Stomach (tissue), 19 donors: ENCODE measurements at regions of chr4 and their contacts with region 1.

Region 1: DNA sequence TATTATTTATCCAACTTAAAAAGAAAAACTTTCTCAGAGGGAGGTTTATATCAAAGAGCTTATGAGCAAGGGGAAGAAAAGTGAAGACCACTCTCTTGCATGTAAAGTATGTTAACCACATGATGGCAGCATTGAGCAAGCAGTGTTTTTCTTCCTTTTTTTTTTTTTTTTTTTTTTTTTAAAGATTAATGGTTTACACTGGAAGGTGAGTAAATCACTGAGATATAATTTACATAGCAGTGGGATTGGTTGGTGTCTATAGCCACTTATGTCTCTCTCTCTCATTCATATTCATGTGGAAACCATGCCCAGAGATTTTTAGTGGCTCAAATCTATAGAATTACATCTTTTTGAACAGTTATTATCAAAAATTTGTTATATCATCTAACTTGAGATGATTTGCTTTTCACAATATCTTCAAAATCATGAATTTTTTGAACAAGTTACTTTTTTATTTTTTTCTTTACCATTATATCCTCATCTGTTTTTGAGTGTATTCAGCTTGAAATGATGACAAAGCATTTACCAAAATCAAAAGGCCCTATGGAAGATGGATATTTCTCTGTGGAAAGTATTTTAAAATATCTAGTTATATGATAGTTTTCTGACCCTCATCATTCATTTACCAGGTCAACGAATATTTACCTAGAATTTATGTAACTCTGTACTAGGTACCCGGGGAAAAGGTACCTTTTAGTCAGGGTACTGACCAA is 31.6 kb downstream of the MTHFD2L start:
- DNase-seq: peak in 1 of 2 donors; percentile 83
- H3K4me3 ChIP-seq: no peak overlapping the region
- H3K27ac ChIP-seq: no peak overlapping the region
- H3K4me1 ChIP-seq: peaks cover 0 to 3% (median 0%) of the 10 kb centered on the region in 4 donors
- H3K27me3 ChIP-seq: no peaks in the 10 kb centered on the region
- CTCF ChIP-seq: peak in 4 of 7 experiments; percentile 41 to 61 (median 48)
- EP300 ChIP-seq: no peak
- POLR2A ChIP-seq: no peak

Region 2: DNA sequence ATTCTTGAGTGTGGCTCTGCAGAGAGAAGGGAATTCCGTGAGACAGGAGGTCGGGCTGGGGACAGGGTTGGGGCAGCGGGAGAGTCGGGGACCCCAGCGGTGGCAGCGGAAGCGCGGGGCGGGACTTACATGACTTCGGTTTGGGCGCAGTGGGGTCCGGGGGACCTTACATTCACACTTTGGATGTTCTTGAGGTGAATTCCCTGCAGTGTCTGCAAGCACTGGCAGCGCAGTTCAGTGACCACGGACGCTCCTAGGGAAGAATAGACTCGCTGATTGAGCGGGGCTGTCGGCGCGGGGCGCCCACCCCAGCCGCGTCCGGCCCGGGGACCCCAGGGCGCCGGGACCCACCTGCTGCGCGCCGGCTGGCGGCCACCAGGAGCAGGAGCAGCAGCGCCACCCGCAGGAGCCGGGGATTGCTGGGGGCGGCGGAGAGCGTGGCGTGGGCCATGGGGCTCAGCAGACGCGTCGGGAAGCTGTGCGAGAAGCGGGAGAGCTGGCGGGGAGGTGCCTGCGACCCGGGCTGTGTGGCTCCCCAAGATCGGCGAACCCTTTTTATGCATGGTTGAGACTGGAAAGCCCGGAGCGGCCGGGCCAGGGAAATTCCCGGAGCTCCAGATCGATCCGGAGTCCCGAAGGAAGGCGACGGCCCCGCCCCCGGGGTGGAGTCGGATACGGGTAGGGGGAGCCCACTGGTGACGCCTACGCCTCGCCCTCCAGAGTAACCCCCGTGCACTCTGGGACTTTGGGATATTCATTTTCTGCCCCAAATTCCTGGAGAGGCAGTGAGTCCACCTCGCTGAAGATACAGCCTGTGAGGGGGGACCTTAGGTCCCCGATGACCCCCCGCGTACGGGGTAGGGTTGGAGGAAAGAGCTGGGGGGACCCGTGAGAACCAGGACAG is 151.1 kb before region 1 on chr4 and contains the start of gene CXCL3:
- intact Hi-C with region 1: no loop called
- DNase-seq: peak; percentile 81 to 90
- H3K4me3 ChIP-seq: peak within 1 kb of the TSS; percentile 58 to 68 (median 62)
- H3K27ac ChIP-seq: peak within 1 kb of the TSS; percentile 67 to 84 (median 78)
- H3K4me1 ChIP-seq: peaks cover 0 to 31% (median 10%) of the 10 kb centered on the region in 4 donors
- H3K27me3 ChIP-seq: no peaks in the 10 kb centered on the region
- CTCF ChIP-seq: peak in 5 of 7 experiments; percentile 23 to 46 (median 29)
- EP300 ChIP-seq: no peak
- POLR2A ChIP-seq: no peak
- total RNA-seq, gene CXCL3: 3.5 to 94.6 (median 25.2) TPM in 4 of 5 donors, not detected in the other

Region 3: GRCh38 chr4:74062953-74063352 is 126.5 kb before region 1 on chr4:
- intact Hi-C with region 1: no loop called
- DNase-seq: no peak
- H3K4me3 ChIP-seq: no peak overlapping the region
- H3K27ac ChIP-seq: no peak overlapping the region
- H3K4me1 ChIP-seq: no peaks in the 10 kb centered on the region
- H3K27me3 ChIP-seq: no peaks in the 10 kb centered on the region
- CTCF ChIP-seq: no peak
- EP300 ChIP-seq: no peak
- POLR2A ChIP-seq: no peak

Region 4: GRCh38 chr4:74311696-74312313 is 122.3 kb after region 1 on chr4:
- intact Hi-C with region 1: loop called (anchors 10 kb)
- DNase-seq: peak in 1 of 2 donors; percentile 82
- H3K4me3 ChIP-seq: no peak overlapping the region
- H3K27ac ChIP-seq: no peak overlapping the region
- H3K4me1 ChIP-seq: no peaks in the 10 kb centered on the region
- H3K27me3 ChIP-seq: no peaks in the 10 kb centered on the region
- CTCF ChIP-seq: peak in 4 of 7 experiments; percentile 32 to 54 (median 46)
- EP300 ChIP-seq: no peak
- POLR2A ChIP-seq: no peak

Region 5: GRCh38 chr4:74418063-74418670 is 228.7 kb after region 1 on chr4:
- intact Hi-C with region 1: no loop called
- DNase-seq: no peak
- H3K4me3 ChIP-seq: no peak overlapping the region
- H3K27ac ChIP-seq: no peak overlapping the region
- H3K4me1 ChIP-seq: peaks cover 0 to 7% (median 3%) of the 10 kb centered on the region in 4 donors
- H3K27me3 ChIP-seq: no peaks in the 10 kb centered on the region
- CTCF ChIP-seq: no peak
- EP300 ChIP-seq: no peak
- POLR2A ChIP-seq: no peak